ENCODE measurements at regions of chr22 and their contacts with region 1.

Region 1: DNA sequence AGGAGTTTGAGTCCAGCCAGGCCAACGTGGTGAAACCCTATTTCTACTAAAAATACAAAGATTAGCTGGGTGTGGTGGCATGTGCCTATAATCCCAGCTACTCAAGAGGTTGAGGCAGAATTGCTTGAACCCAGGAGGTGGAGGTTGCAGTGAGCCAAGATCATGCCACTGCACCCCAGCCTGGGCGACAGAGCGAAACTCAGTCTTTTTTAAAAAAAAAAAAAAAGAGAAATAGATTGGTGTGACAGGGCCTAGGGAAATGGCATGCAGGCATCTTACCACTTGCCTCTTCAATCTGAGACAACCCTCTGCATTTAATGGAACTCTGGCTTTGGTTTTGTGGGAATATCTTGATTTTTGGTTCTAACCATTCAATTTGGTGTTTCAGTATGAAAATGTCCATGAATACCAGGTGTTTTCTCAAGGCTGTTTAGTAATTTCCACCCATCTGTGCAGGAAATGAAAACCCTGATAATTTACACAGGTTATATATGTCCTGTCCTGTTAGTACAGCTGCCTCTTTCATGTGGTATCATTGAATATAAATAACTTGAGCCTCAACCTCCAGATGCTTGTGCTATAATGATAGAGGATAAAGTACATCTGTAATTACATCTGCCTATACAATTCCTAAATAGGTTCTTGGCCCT is 8.4 kb downstream of the XBP1 start:
- DNase-seq: peak; percentile 80
- ATAC-seq: peak; percentile 77
- H3K4me3 ChIP-seq: no peak overlapping the region
- H3K27ac ChIP-seq: peak overlapping the region; percentile 64
- H3K4me1 ChIP-seq: peaks cover 46% of the 10 kb centered on the region
- H3K27me3 ChIP-seq: no peaks in the 10 kb centered on the region
- CTCF ChIP-seq: no peak
- EP300 ChIP-seq: peak in 1 of 2 experiments; percentile 82; a peak in 3 of 4 replicates
- POLR2A ChIP-seq: no peak
- RAD21 ChIP-seq: no peak

Region 2: DNA sequence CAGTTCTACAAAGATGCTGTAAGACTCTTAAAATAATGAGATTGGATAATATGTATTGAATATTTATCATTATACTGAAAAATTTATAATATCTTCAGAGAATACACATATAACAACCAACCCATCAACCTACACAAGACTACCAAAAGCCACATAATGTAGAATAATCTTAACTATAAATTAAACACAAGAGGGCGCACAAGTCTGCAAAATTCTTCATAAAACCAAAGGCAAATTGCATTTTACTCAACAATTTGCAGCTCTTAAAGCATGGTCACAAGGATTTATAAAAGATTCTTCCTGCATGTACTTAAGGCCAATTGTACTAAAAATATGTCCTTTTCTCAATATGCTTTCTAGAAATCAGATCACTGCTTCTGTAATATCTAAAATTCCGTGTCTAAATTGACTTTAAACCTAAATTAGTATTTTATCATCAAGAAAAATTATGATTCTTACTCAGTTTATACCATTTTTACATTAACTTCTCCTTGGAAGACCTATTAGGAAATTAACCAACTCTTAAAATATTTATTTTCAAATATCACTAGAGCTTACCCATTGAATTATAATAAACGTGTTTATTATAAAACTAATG is 191.3 kb before region 1 on chr22:
- CTCF ChIA-PET with region 1: interaction called, 42 read pairs
- POLR2A ChIA-PET with region 1: no interaction called
- RAD21 ChIA-PET with region 1: interaction called, 9 read pairs
- SMC1A ChIA-PET with region 1: interaction called, 17 read pairs
- in situ Hi-C with region 1: no loop called
- intact Hi-C with region 1: no loop called
- DNase-seq: no peak
- ATAC-seq: peak; percentile 59
- H3K4me3 ChIP-seq: no peak overlapping the region
- H3K27ac ChIP-seq: no peak overlapping the region
- H3K4me1 ChIP-seq: no peaks in the 10 kb centered on the region
- H3K27me3 ChIP-seq: no peaks in the 10 kb centered on the region
- CTCF ChIP-seq: peak; percentile 23 to 63 (median 37); a peak in 4 of 6 replicates
- EP300 ChIP-seq: no peak
- POLR2A ChIP-seq: no peak
- RAD21 ChIP-seq: peak; percentile 87

Region 3: DNA sequence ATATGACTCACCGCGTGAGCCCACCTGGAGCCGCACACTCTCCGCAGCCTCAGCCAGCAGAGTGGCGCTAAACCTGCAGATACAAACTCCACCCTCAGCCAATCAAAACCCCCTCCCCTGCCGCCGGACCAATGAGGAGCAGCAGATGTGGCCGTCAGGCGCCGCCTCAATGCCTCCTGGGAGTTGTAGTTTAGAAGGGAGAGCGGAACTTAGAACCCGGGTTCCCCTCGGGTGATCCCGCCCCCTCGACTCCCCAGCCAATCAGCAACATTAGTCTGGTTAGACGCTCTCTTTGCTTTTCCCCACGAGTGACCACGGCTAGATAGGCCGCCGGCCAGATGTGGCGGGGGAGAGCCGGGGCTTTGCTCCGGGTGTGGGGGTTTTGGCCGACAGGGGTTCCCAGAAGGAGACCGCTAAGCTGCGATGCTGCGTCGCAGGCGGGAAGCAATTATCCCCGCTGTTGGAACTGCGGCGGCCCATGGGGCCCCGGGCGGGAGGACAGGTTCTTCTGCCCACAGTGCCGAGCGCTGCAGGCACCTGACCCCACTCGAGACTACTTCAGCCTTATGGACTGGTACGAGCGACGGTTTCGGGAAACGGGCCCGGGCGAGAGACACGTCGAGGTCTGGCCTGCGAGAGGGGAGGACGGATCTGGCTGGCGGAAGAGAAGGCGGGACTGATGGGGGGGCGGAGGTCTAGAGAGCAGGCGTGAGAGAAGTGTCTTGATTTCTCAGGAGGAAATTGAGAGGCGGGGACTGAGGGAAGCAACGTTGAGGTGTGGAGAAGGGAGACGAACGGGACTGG is 50.0 kb before region 1 on chr22 and contains the starts of genes CHEK2 and HSCB:
- CTCF ChIA-PET with region 1: interaction called, 5 read pairs
- POLR2A ChIA-PET with region 1: no interaction called
- RAD21 ChIA-PET with region 1: interaction called, 3 read pairs
- SMC1A ChIA-PET with region 1: interaction called, 5 read pairs
- in situ Hi-C with region 1: no loop called
- intact Hi-C with region 1: loop called (anchors 5 kb)
- DNase-seq: peak; percentile 96
- ATAC-seq: peak; percentile 95
- H3K4me3 ChIP-seq: peak within 1 kb of the TSS; percentile 69
- H3K27ac ChIP-seq: peak within 1 kb of the TSS; percentile 82
- H3K4me1 ChIP-seq: peaks cover 7% of the 10 kb centered on the region
- H3K27me3 ChIP-seq: no peaks in the 10 kb centered on the region
- CTCF ChIP-seq: peak in 1 of 3 experiments; percentile 27; a peak in 1 of 6 replicates
- EP300 ChIP-seq: no peak
- POLR2A ChIP-seq: peak; percentile 94
- RAD21 ChIP-seq: no peak
- polyA plus RNA-seq, gene CHEK2: 31.1 to 31.4 TPM
- polyA plus RNA-seq, gene HSCB: 10.6 to 19.0 TPM

Region 4: GRCh38 chr22:28772633-28773460 is 19.1 kb before region 1 on chr22 and contains the start of gene CCDC117:
- CTCF ChIA-PET with region 1: interaction called, 19 read pairs
- POLR2A ChIA-PET with region 1: interaction called, 9 read pairs
- RAD21 ChIA-PET with region 1: no interaction called
- SMC1A ChIA-PET with region 1: interaction called, 17 read pairs
- in situ Hi-C with region 1: no loop called
- intact Hi-C with region 1: no loop called
- DNase-seq: peak; percentile 84
- ATAC-seq: peak; percentile 93
- H3K4me3 ChIP-seq: peak within 1 kb of the TSS; percentile 96
- H3K27ac ChIP-seq: peak within 1 kb of the TSS; percentile 89
- H3K4me1 ChIP-seq: no peaks in the 10 kb centered on the region
- H3K27me3 ChIP-seq: no peaks in the 10 kb centered on the region
- CTCF ChIP-seq: peak in 2 of 3 experiments; percentile 12 to 19; a peak in 2 of 6 replicates
- EP300 ChIP-seq: peak; percentile 5 to 40; a peak in 1 of 4 replicates
- POLR2A ChIP-seq: peak; percentile 82
- RAD21 ChIP-seq: peak; percentile 13; the same call in 1 of the 2 replicates
- polyA plus RNA-seq, gene CCDC117: 6.3 to 8.3 TPM

Region 5: GRCh38 chr22:28779833-28780232 is 12.1 kb before region 1 on chr22:
- CTCF ChIA-PET with region 1: interaction called, 19 read pairs
- POLR2A ChIA-PET with region 1: interaction called, 5 read pairs
- RAD21 ChIA-PET with region 1: interaction called, 6 read pairs
- SMC1A ChIA-PET with region 1: interaction called, 17 read pairs
- in situ Hi-C with region 1: no loop called
- intact Hi-C with region 1: no loop called
- DNase-seq: no peak
- ATAC-seq: no peak
- H3K4me3 ChIP-seq: no peak overlapping the region
- H3K27ac ChIP-seq: no peak overlapping the region
- H3K4me1 ChIP-seq: no peaks in the 10 kb centered on the region
- H3K27me3 ChIP-seq: no peaks in the 10 kb centered on the region
- CTCF ChIP-seq: no peak
- EP300 ChIP-seq: no peak
- POLR2A ChIP-seq: no peak
- RAD21 ChIP-seq: no peak

Region 6: GRCh38 chr22:28810821-28811491 is 19.0 kb after region 1 on chr22:
- CTCF ChIA-PET with region 1: interaction called, 17 read pairs
- POLR2A ChIA-PET with region 1: interaction called, 78 read pairs
- RAD21 ChIA-PET with region 1: interaction called, 74 read pairs
- SMC1A ChIA-PET with region 1: interaction called, 49 read pairs
- in situ Hi-C with region 1: no loop called
- intact Hi-C with region 1: no loop called
- DNase-seq: no peak
- ATAC-seq: peak; percentile 34
- H3K4me3 ChIP-seq: no peak overlapping the region
- H3K27ac ChIP-seq: peak overlapping the region; percentile 51; the same call in 1 of the 2 replicates
- H3K4me1 ChIP-seq: peaks cover 21% of the 10 kb centered on the region
- H3K27me3 ChIP-seq: no peaks in the 10 kb centered on the region
- CTCF ChIP-seq: no peak
- EP300 ChIP-seq: no peak
- POLR2A ChIP-seq: no peak
- RAD21 ChIP-seq: no peak

Region 7: GRCh38 chr22:28817919-28818909 is 26.2 kb after region 1 on chr22:
- CTCF ChIA-PET with region 1: interaction called, 30 read pairs
- POLR2A ChIA-PET with region 1: interaction called, 78 read pairs
- RAD21 ChIA-PET with region 1: interaction called, 58 read pairs
- SMC1A ChIA-PET with region 1: interaction called, 130 read pairs
- in situ Hi-C with region 1: no loop called
- intact Hi-C with region 1: no loop called
- DNase-seq: no peak
- ATAC-seq: peak; percentile 50
- H3K4me3 ChIP-seq: 0 out of 2 replicates have a peak overlapping the region, but pooled peaks have one; percentile 8
- H3K27ac ChIP-seq: peak overlapping the region; percentile 49
- H3K4me1 ChIP-seq: peaks cover 42% of the 10 kb centered on the region
- H3K27me3 ChIP-seq: no peaks in the 10 kb centered on the region
- CTCF ChIP-seq: no peak
- EP300 ChIP-seq: no peak
- POLR2A ChIP-seq: no peak
- RAD21 ChIP-seq: no peak

Region 8: DNA sequence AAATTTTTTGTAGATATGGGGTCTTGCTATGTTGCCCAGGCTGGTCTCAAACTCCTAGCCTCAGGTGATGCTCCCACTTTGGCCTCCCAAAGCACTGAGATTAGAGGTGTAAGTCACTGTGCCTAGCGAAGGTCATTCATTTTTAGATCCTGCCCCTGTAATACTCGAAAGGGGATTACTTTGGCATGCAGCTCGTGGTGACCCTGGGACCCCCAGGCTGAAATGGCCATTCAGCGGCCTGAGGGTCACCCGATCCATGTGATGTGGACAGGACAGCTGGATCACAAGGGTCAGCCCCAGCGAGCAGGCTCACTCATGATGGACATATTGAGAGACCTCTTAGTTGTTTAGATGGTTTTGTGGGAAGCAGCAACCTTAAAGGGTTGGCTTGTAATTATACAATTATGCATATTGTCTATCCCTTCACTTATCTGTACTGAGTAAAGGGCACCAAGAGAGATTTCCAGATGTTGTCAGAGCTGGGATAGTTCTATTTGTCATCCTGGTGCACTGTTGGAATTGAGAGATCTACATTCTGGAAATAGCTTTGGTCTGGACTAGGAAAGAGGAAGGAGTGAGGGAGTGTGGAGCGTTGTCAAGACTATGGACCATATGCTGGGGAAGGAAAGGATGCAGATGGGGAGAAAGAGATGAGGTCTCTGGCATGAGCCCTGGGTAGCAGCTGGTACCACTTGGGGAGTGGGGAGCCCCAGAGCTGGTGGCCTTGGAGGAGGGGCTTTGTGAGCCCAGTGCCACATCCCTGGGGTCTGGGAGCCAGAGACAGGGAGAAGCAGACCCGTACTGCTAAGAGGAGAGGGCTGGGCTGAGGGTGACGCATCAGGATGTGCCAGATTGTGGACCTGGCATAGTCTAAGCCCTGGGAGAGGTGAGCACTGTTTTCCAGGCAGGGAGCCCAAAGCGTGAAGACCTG is 460.3 kb after region 1 on chr22:
- CTCF ChIA-PET with region 1: no interaction called
- POLR2A ChIA-PET with region 1: no interaction called
- RAD21 ChIA-PET with region 1: no interaction called
- SMC1A ChIA-PET with region 1: no interaction called
- in situ Hi-C with region 1: no loop called
- intact Hi-C with region 1: no loop called
- DNase-seq: no peak
- ATAC-seq: no peak
- H3K4me3 ChIP-seq: no peak overlapping the region
- H3K27ac ChIP-seq: no peak overlapping the region
- H3K4me1 ChIP-seq: no peaks in the 10 kb centered on the region
- H3K27me3 ChIP-seq: no peaks in the 10 kb centered on the region
- CTCF ChIP-seq: no peak
- EP300 ChIP-seq: no peak
- POLR2A ChIP-seq: no peak
- RAD21 ChIP-seq: no peak